ENCODE measurements at regions of chr4 and their contacts with region 1.

Region 1: DNA sequence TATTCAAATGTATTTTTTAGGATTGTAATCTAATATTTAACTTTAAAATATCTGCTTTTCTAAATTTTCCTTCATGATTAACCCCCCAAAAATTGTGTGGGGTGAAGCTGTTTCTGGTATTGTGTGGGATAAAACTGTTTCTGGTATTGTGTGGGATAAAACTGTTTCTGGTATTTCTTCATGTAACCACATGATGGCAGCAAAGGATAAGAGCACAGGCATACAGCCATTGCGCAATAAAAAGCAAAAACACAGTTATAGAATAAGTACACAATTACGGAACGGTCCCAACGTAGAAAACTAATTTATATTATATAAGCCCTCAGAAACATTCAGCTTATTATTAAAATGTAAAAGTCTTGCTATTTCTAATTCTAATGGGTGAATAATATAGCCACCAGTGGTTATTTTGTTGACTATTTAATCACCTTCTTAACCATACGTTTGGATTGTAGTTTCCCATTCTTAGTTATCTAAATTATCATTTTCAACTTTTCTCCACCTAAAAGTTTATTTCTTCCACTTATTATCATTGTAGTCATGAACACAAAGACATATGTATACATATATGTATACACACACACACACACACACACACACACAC is 333.9 kb upstream of the FSTL5 start:
- DNase-seq: no peak
- ATAC-seq: peak; percentile 52 to 88 (median 76)
- H3K4me3 ChIP-seq: peak overlapping the region in 5 of 10 donors; percentile 12 to 32 (median 26)
- H3K27ac ChIP-seq: peak overlapping the region in 1 of 10 donors; percentile 12
- H3K4me1 ChIP-seq: peaks cover 0 to 5% (median 0%) of the 10 kb centered on the region in 9 donors
- H3K27me3 ChIP-seq: no peaks in the 10 kb centered on the region
- CTCF ChIP-seq: peak; percentile 68 to 92 (median 81)

Region 2: DNA sequence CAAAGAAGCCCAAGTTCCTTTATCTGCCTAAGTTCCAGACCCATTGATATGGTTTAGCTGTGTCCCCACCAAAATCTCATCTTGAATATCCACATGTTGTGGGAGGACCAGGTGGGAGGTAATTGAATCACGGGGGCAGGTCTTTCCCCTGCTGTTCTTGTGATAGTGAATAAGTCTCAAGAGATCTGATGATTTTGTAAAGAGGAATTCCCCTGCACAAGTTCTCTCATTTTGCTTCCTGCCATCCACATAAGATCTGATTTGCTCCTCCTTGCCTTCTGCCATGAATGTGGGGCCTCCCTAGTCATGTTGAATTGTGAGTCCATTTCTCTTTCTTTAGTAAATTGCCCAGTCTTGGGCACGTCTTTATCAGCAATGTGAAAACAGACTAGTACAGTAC is 1194.1 kb before region 1 on chr4:
- intact Hi-C with region 1: no loop called
- DNase-seq: no peak
- ATAC-seq: no peak
- H3K4me3 ChIP-seq: no peak overlapping the region
- H3K27ac ChIP-seq: no peak overlapping the region
- H3K4me1 ChIP-seq: no peaks in the 10 kb centered on the region
- H3K27me3 ChIP-seq: no peaks in the 10 kb centered on the region
- CTCF ChIP-seq: no peak

Region 3: GRCh38 chr4:162347842-162348213 is 149.8 kb before region 1 on chr4:
- intact Hi-C with region 1: no loop called
- DNase-seq: peak; percentile 21 to 67
- ATAC-seq: peak; percentile 92 to 99 (median 99)
- H3K4me3 ChIP-seq: no peak overlapping the region
- H3K27ac ChIP-seq: peak overlapping the region in 9 of 10 donors; percentile 3 to 53 (median 23)
- H3K4me1 ChIP-seq: peaks cover 0 to 37% (median 22%) of the 10 kb centered on the region in 9 donors
- H3K27me3 ChIP-seq: no peaks in the 10 kb centered on the region
- CTCF ChIP-seq: no peak

Region 4: DNA sequence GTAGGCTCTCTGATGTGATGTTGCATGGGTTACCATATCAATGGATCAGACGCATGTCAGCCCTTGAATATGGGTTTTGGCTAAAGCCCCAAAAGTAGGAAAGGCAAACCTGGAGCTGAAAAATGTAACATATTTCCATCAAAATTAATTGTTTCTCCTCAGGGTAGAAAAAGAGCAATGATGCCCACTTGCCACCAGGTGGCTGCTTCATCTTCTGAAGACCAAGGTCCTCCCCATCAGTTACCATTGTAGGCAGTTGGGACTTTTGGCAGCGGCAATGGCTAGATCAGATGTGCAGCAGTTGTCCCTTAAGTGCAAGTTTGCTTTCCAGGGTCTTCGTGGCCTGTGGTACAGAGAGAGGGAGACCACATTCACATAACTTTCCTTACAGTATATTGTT is 550.8 kb after region 1 on chr4:
- intact Hi-C with region 1: loop called in 1 of 10 experiments (anchors 10 kb)
- DNase-seq: no peak
- ATAC-seq: no peak
- H3K4me3 ChIP-seq: no peak overlapping the region
- H3K27ac ChIP-seq: no peak overlapping the region
- H3K4me1 ChIP-seq: no peaks in the 10 kb centered on the region
- H3K27me3 ChIP-seq: no peaks in the 10 kb centered on the region
- CTCF ChIP-seq: peak in 7 of 9 donors; percentile 19 to 38 (median 31)